ENCODE measurements at regions of chr1 and their contacts with region 1.

Region 1: GRCh38 chr1:12454406-12455391 is 163.3 kb downstream of the DHRS3 start:
- DNase-seq: peak; percentile 95
- H3K4me3 ChIP-seq: no peak overlapping the region
- H3K27ac ChIP-seq: peak overlapping the region; percentile 85 to 87 (median 86)
- H3K4me1 ChIP-seq: peaks cover 96 to 100% (median 100%) of the 10 kb centered on the region in 4 donors
- H3K27me3 ChIP-seq: no peaks in the 10 kb centered on the region
- CTCF ChIP-seq: peak in 2 of 3 experiments; percentile 6 to 17
- EP300 ChIP-seq: peak; percentile 79
- POLR2A ChIP-seq: no peak

Region 2: DNA sequence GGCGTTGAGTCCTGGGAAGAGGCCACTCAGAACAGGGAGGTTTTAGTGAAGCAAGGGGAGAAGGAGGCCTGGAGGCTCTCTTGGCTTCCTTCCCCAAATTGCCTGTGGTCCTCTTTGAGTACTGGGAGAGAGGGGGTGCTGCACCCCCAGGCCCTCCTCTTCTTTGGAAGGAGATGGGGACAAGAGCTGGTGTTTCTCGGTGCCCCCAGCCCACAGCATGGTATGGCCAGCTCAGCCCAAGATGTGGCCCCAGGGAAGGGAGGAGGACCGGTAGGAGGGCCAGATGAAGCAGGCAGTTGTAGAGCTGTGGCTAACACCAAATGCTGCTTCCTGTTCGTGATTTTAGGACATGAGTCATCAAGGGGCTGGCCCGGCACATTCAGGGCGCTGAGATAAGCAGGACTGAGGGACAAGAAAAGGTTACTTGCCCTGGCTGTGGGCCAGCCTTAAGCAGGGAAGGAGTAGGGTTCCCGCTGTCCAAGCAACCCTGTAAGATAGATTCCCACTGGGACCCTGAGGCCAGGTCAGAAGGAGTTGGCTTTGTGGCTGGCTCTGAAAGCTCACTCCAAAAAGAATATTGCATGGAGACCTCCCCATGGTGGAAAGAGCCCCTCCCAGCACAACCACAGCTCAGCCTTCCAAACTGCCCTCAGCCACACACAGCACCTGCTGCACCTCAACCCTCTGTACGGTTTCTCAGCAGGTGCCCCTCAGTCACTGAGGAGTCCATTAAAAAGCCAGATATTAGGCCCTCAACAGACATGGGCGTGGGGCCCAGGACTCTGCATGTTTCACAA is 292.8 kb before region 1 on chr1:
- intact Hi-C with region 1: no loop called
- DNase-seq: peak; percentile 95
- H3K4me3 ChIP-seq: no peak overlapping the region
- H3K27ac ChIP-seq: peak overlapping the region; percentile 47 to 74 (median 53)
- H3K4me1 ChIP-seq: peaks cover 27 to 38% (median 29%) of the 10 kb centered on the region in 4 donors
- H3K27me3 ChIP-seq: peaks cover 0 to 8% (median 0%) of the 10 kb centered on the region in 4 donors
- CTCF ChIP-seq: no peak
- EP300 ChIP-seq: no peak
- POLR2A ChIP-seq: no peak

Region 3: GRCh38 chr1:12549460-12550349 is 95.0 kb after region 1 on chr1:
- intact Hi-C with region 1: loop called (anchors 5 kb)
- DNase-seq: peak; percentile 96
- H3K4me3 ChIP-seq: peak overlapping the region; percentile 4 to 37 (median 11)
- H3K27ac ChIP-seq: peak overlapping the region; percentile 86 to 94 (median 91)
- H3K4me1 ChIP-seq: peaks cover 54 to 79% (median 74%) of the 10 kb centered on the region in 4 donors
- H3K27me3 ChIP-seq: no peaks in the 10 kb centered on the region
- CTCF ChIP-seq: no peak
- EP300 ChIP-seq: no peak
- POLR2A ChIP-seq: no peak

Measured in esophagus muscularis mucosa (tissue), 4 donors.